Astrocyte of the cerebellum (primary cell): ENCODE measurements at regions of chr17 and their contacts with region 1.

Region 1: DNA sequence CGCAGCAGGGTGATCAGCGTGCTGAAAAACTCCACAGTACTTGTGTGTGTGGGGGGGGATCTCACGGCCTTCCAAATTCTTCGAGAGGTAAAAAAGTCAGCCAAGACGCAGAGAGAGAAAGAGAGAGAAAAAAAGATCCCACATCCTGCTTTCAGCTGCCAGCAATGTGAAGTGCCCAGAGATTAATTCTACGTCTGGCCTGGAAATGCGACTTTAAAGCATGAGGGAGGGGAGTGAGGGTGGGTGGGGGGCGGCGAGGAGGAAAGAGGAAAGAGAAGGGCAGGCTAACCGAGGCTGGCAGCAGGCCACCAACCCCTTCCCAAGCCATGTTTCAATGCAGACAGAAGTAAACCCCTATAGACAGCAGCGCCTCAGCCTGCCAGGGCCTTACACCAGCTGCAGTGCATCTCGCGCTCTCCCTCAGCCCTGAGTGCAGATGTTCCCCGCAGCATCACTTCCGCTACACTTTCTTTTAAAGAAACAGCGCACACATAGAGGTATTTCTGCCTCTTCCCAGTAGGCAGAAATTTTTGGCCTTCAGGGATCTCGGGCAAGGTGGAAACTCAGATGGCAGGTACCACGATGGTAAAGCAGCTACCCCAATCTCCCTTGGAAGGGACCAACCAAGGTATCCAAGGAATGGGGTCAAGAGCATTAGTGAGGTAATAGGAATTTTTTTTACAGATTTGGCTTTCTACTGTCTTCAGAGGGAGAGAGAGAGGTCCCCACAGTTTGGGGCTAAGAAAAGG is 87.8 kb downstream of the SMG6 start:
- DNase-seq: peak; percentile 95
- H3K4me3 ChIP-seq: peak overlapping the region; percentile 6
- CTCF ChIP-seq: peak; percentile 10

Region 2: GRCh38 chr17:2266045-2266864 is 50.5 kb after region 1 on chr17:
- in situ Hi-C with region 1: loop called (anchors 5 kb)
- DNase-seq: no peak
- H3K4me3 ChIP-seq: no peak overlapping the region
- CTCF ChIP-seq: no peak

Region 3: DNA sequence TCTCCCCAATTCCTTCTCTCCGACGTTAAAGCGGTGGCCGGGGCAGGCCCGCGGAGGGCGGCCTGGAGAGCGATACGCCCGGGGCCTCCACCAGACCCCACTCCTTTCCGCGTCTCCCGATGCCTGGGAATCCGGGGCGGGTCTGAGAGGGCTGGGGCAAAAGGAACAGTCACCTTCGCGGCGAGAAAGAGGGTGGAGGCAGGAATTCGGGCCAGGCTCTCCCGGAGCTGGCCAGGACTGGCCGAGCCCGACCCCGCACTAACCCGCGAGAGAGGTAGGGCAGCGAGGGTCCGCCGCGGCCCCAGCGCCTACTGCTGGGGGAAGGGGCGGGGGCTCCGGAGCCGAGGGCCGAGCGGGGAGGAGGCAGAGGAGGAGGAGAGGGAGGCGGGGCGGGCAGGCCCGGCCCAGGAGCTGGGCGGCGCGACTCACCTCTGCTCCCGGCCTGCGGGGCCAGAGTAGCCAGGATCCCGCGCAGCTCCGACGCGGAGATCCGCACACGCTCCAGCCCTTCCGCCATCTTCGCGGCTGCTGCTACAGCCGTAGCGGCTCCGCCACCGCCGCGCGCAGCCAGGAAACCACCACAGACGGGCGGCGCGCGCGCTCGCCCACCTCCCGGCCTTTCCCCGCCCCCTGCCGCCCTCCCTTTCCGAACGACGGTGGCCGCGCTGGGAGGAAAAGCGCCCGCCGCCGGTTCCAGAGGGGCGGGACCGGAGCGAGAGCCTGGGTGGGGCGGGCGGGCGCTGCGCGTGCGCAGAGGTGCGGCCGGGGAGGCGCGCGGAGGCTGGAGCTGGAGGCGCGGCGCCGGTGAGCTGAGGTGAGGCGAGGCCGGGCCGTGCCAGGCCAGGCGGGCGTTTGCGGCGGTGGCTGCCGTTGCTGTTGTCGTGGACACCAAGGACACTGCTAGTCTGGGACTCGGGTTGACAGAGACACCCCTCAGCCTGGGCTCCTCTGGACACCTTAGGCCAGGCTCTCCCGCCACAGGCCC is 87.7 kb after region 1 on chr17 and contains the starts of genes SMG6 and SRR:
- in situ Hi-C with region 1: no loop called
- DNase-seq: peak; percentile 67
- H3K4me3 ChIP-seq: peak within 1 kb of the TSS; percentile 77
- CTCF ChIP-seq: no peak